Activated CD4-positive, alpha-beta memory T cell treated with anti-CD3 and anti-CD28 coated beads, Interleukin-2, amount 10 ng/mL, durations not matched to agents 7 days and 5 days (primary cell): ENCODE measurements at regions of chr17 and their contacts with region 1.

Region 1: GRCh38 chr17:8248751-8249607 is at the start of gene PFAS:
- DNase-seq: peak; percentile 96
- H3K4me3 Mint-ChIP-seq: peak within 1 kb of the TSS; percentile 94
- H3K27ac Mint-ChIP-seq: peak within 1 kb of the TSS; percentile 100
- H3K4me1 Mint-ChIP-seq: peaks cover 50% of the 10 kb centered on the region
- H3K27me3 Mint-ChIP-seq: no peaks in the 10 kb centered on the region
- total RNA-seq, gene PFAS: 43.6 to 45.9 TPM

Region 2: DNA sequence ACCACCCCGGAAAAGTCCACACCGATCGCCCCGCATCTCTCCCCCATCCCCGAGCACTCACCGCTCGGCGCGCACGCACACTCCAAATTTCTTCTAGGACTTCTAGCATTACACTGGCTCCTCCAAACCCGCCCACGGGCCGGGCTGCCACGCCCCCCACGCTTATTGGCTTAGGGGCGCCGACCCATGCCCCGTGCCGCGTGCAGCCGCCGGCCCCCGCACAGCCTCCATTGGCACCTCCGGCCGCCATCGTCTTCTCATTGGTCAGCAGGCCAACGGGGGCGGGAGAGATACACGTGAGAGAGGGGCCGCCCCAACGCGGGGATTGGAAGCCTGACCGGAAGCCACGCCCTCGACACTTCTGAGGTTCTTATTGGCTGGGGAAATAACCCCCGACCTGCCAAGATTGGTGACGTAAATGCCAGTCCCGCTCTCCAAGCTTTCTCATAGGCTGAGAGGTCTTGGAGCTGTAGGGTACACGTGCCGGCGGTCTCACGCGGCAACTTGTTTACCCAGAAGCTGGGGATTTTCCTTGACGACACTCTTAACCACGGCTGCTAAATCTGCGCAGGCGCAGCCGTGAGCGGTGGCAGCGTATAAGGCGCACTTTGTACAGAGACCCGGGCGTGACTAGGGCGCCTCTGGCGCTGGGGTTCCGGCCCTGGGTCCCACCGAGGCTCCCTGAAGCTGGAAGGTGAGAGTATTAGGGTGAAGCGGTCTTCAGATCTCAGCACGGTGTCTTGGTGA is 92.6 kb before region 1 on chr17:
- CTCF ChIA-PET with region 1: no interaction called
- POLR2A ChIA-PET with region 1: interaction called, 10 read pairs
- DNase-seq: peak; percentile 100
- H3K4me3 Mint-ChIP-seq: no peak overlapping the region
- H3K27ac Mint-ChIP-seq: no peak overlapping the region
- H3K4me1 Mint-ChIP-seq: peaks cover 51% of the 10 kb centered on the region
- H3K27me3 Mint-ChIP-seq: no peaks in the 10 kb centered on the region

Region 3: DNA sequence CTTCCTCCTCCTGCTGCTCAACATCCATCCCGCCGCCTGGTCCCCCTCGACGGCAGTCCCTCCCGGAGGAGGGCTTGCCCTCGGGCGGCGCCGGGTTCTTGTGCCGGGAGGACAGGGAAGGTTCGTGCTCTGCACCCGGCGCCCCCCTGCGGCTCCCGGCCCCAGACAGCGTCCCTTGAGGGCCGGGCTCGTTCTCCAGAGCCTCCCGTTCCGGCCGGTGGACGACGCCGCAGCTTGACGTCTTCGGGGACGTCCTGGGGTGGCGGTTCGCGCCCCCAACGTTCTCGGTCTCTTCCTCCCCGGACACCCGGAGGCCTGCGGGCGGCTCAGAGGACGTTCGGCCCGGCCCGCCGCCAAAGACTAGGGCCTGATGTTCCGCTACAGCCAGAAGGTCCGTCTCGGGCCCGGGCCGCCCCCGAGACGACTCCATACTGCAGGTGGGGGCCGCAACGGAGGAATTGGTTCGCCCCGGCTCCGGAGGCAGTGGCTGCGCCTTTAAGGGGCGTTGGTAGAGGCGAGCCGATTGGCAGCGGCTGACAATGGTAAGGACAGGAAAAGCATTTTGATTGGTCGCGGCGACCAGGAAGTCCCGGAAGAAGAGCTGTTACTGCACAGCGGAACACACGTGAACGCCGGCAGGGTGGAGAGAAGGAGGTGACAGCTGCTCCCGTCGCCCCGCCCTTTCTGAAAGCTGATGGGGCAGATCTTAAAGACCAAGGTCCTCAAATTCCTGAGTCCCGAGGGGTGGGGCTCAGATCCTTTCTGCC is 59.1 kb before region 1 on chr17 and contains the start of gene BORCS6:
- CTCF ChIA-PET with region 1: interaction called, 6 read pairs
- POLR2A ChIA-PET with region 1: interaction called, 96 read pairs
- DNase-seq: peak; percentile 97
- H3K4me3 Mint-ChIP-seq: no peak within 1 kb of the TSS
- H3K27ac Mint-ChIP-seq: no peak within 1 kb of the TSS
- H3K4me1 Mint-ChIP-seq: peaks cover 13% of the 10 kb centered on the region
- H3K27me3 Mint-ChIP-seq: no peaks in the 10 kb centered on the region
- total RNA-seq, gene BORCS6: 16.3 to 17.0 TPM

Region 4: DNA sequence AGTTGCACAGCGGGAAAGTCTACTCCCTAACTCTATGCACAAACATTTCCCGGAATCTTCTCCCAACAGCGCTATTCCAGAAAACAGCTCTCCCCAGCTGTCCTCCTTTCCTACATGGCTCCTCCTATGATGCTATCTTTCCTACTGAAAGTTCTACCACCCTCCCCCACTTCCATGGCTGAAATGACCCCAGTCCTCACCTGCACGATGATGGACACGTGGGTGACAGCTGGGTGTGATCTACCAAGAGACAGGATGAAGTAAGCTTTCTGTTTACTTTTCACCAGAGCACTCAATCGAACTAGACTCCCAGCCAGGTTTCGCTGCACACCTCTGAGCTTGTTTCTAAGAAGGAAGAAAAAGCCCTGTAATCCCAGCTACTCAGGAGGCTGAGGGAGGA is 11.8 kb before region 1 on chr17:
- CTCF ChIA-PET with region 1: interaction called, 4 read pairs
- POLR2A ChIA-PET with region 1: interaction called, 22 read pairs
- DNase-seq: no peak
- H3K4me3 Mint-ChIP-seq: no peak overlapping the region
- H3K27ac Mint-ChIP-seq: no peak overlapping the region
- H3K4me1 Mint-ChIP-seq: peaks cover 11% of the 10 kb centered on the region
- H3K27me3 Mint-ChIP-seq: no peaks in the 10 kb centered on the region

Region 5: GRCh38 chr17:8294814-8295316 is 45.9 kb after region 1 on chr17:
- CTCF ChIA-PET with region 1: interaction called, 22 read pairs
- POLR2A ChIA-PET with region 1: interaction called, 132 read pairs
- DNase-seq: no peak
- H3K4me3 Mint-ChIP-seq: peak overlapping the region; percentile 89
- H3K27ac Mint-ChIP-seq: peak overlapping the region; percentile 83
- H3K4me1 Mint-ChIP-seq: peaks cover 53% of the 10 kb centered on the region
- H3K27me3 Mint-ChIP-seq: no peaks in the 10 kb centered on the region

Region 6: GRCh38 chr17:8376271-8377067 is 127.5 kb after region 1 on chr17 and contains the start of gene KRABD2:
- CTCF ChIA-PET with region 1: interaction called, 4 read pairs
- POLR2A ChIA-PET with region 1: interaction called, 18 read pairs
- DNase-seq: peak; percentile 90
- H3K4me3 Mint-ChIP-seq: peak within 1 kb of the TSS; percentile 75
- H3K27ac Mint-ChIP-seq: peak within 1 kb of the TSS; percentile 80
- H3K4me1 Mint-ChIP-seq: peaks cover 59% of the 10 kb centered on the region
- H3K27me3 Mint-ChIP-seq: no peaks in the 10 kb centered on the region